ENCODE measurements at regions of chr9 and their contacts with region 1.

Region 1: DNA sequence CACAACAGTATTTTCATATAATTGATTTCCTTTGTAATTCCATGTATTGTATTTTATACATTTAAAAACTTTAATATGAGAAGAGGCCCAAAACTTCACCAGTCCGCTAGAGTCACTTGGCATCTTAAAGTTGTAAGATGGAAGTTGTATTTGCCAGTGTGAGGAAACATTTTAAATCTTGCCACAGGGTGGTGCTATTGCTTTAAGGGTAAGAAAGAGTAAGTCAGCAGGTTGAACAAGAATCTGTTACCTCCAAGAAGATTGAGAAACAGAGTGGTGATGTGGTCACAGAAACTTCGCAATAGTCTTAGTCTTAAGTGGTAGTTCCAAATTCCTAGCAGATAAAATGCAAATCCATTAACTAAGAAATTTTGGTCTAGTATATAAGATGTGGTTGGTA is 39.8 kb upstream of the RANBP6 start:
- DNase-seq: no peak
- ATAC-seq: peak; percentile 93

Region 2: DNA sequence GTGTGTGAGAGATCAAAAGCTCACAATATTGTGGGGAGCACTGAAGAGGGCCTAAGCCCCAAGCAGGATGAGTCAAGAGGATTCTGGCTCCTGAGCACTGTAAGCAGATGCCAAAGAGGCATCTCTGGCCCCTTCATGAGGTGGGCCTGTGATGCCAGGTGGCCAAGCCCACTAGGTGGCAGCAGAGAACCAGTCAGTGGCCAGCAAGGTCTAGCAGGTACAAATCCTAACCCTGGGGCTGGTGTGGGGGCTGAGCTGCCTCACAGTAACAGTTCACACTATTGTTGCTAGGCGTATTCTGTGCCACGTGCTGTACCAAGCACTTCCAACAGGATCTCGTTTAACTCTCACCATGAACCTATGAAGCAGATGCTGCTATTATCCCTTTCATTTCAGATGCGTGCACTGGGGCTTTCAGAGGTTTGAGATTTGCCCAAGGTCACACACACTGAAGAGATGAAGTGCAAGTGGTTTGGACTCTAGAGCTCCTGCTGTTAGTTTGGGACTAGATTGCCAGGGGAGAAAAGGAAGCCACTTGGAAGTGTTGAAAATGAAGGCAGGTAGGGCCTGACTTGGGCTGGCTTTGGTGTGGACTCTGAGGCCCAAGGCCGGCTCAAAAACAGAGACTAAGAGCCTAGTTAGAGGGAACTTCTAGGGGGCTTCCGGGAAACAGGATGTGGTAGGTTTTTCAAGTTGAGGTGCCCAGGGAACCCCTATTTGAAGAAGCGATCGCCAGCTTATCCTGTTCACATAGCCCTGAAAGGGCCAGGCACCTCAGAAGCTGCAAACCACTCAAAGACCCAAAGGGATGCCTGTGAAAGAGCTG is 168.9 kb before region 1 on chr9:
- intact Hi-C with region 1: loop called (anchors 5 kb)
- DNase-seq: peak; percentile 80
- ATAC-seq: peak; percentile 86